ENCODE measurements at regions of chr12 and their contacts with region 1.

Region 1: DNA sequence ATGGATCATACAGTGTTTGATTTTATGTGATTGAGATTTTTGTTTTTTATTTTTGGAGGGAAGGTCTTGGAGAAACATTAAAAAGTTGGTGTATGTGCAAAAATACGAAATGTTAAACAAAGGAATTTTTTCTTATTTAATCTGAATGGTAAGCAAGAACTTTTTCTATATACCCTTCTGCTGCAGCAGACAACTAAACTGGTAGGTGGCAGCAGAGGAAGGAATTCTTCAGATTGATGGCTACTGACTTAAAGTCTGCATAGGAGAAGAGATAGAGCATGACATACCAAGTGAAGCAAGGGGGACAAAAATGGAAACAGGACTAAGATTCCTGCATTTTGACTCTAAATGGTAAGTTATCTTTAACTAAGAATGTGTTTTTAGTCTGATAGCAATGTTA is 42.0 kb upstream of the A2ML1 start:
- DNase-seq: peak; percentile 24
- H3K4me3 ChIP-seq: no peak overlapping the region
- H3K27ac ChIP-seq: no peak overlapping the region; a peak in 1 of 4 replicates
- H3K4me1 ChIP-seq: peaks cover 0 to 15% of the 10 kb centered on the region in 2 experiments; a peak in 2 of 4 replicates
- H3K27me3 ChIP-seq: no peaks in the 10 kb centered on the region
- CTCF ChIP-seq: peak; percentile 48
- EP300 ChIP-seq: no peak
- RAD21 ChIP-seq: peak; percentile 59

Region 2: GRCh38 chr12:8681041-8681902 is 99.1 kb before region 1 on chr12:
- CTCF ChIA-PET with region 1: interaction called, 10 read pairs
- POLR2A ChIA-PET with region 1: no interaction called
- DNase-seq: no peak
- H3K4me3 ChIP-seq: no peak overlapping the region; a peak in 2 of 4 replicates
- H3K27ac ChIP-seq: no peak overlapping the region
- H3K4me1 ChIP-seq: no peaks in the 10 kb centered on the region; a peak in 1 of 4 replicates
- H3K27me3 ChIP-seq: no peaks in the 10 kb centered on the region
- CTCF ChIP-seq: no peak
- EP300 ChIP-seq: no peak
- RAD21 ChIP-seq: no peak

Measured in SK-N-SH (cell line).